HEK293T (cell line): ENCODE measurements at regions of chr5 and their contacts with region 1.

Region 1: DNA sequence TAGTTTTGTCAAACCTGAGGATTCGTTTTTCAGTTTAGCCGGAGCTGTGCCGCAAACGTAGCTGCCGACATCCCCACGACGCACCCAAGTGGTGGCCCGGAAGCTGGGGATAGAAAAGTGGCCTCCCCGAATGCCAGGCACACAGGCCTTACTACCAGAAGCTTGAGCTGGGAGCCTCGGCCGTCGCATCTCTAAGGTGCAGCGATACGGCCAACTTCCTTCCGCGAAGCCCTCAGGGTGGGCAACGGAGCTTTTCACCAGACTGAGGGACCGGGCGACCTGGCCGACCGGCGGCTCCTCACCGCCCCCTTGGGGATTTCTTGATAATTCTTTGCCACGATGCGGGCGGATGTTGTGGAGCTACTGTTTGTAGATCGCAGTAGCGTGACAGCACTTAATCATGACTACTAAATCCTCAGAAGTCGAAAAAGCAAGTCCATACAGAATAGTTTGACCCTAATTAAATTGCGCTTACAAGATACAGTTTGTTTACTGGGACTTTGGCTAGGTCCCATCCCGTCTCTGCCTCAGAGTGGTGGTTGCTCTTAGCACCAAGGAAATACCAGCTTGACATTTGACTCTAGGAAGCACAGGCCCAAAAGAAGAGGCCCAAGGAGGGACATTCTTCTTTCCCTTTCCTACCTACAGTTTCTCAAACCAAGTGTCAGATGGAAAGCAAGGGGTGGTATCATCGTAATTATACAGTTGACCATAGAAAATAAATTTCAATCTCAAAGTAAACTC is 613 bp upstream of the TMEM267 start:
- DNase-seq: peak; percentile 80

Region 2: DNA sequence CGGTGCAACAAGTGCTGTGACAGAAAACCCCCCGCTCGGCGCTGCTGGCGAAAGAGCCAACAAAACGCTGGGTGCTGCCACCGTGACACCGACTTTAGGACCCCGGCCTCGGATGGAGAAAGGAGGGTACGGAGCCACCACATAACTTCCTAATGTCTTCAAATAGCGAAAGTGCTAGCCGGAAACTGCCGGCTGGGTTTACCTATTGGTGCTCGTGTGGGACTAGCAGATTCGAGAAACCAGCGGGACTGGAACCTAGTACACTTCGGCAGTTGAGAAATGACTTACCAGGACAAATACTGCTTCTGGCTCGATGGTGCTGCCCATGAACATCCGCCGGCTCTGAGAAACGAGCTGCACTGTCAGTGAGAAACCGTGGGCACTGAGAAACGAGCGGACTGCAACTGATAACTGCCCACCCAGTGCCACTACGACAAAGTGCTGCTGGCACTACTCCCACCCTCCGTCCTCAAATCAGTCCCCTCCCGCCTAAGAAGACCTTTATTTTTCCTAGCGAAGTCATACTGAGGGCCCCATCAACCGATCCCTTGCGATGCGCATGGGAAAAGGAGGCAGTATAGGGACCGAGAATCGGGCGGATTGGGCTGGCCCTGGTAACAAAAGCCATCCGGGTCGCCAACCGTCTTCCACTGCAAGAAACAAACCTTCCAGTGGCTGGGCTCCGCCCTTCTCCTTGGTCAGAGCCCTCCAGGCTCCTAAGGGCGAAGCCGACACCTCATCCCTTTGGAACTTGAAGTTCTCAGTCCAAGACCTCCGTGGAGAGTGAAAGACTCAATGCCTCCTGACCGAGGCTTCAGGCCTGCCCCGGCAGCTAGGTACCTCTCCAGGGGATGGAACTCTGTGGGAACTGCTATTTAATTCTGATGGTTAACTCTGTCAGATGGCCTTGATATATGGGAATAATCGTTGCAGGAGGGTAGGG is 417.2 kb before region 1 on chr5:
- CTCF ChIA-PET with region 1: no interaction called
- POLR2A ChIA-PET with region 1: interaction called, 18 read pairs
- DNase-seq: peak; percentile 41

Region 3: GRCh38 chr5:43313035-43313853 is 171.0 kb before region 1 on chr5 and contains the start of gene HMGCS1:
- CTCF ChIA-PET with region 1: interaction called, 3 read pairs
- POLR2A ChIA-PET with region 1: interaction called, 16 read pairs
- DNase-seq: peak; percentile 92

Region 4: GRCh38 chr5:43409809-43410271 is 74.4 kb before region 1 on chr5:
- CTCF ChIA-PET with region 1: interaction called, 3 read pairs
- POLR2A ChIA-PET with region 1: interaction called, 18 read pairs
- DNase-seq: no peak

Region 5: DNA sequence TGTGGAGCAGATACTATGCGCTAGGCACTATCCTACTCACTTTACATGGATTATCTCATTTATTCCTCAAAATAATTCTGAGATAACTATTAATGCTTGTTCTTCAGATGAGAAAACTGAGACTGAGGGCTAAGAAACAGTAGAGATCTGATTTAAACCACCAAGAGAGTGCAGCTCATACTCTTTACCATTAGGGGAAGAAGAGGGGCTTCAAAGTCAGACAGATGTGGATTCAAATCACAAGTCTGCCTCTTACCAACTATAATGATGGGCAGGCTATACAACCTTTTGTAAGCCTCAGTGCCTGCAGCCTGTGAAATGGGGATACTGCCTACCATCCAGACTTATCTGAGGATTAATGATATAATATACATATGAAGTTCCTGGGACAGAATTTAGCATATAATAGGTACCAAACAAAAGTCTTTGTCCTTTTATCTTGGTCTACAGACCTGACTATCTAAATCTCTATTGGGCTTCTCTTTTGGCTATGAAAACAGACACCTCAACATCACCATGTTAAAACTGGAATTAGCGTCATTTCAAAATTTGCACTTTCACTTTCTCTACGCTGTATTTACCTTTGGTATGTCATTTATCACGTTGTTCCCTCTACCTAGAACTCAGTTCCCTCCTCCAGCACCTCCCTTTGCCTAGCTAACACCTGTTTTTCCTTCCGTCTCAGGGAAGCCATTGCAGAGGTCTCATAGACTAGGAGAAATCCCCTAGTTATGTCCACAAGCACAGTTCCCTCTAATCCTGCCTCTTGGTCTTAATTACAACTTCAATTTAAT is 13.2 kb after region 1 on chr5:
- CTCF ChIA-PET with region 1: interaction called, 3 read pairs
- POLR2A ChIA-PET with region 1: interaction called, 35 read pairs
- DNase-seq: no peak

Region 6: GRCh38 chr5:43556857-43557542 is 72.7 kb after region 1 on chr5 and contains the start of gene PAIP1:
- CTCF ChIA-PET with region 1: no interaction called
- POLR2A ChIA-PET with region 1: interaction called, 13 read pairs
- DNase-seq: peak; percentile 78